ENCODE measurements at regions of chr11 and their contacts with region 1.

Region 1: GRCh38 chr11:111230122-111230465 is 15.4 kb upstream of the POU2AF2 start:
- DNase-seq: no peak
- ATAC-seq: peak; percentile 50
- H3K4me3 ChIP-seq: no peak overlapping the region
- H3K27ac ChIP-seq: peak overlapping the region; percentile 33; the same call in 1 of the 2 replicates
- H3K4me1 ChIP-seq: peaks cover 8% of the 10 kb centered on the region
- H3K27me3 ChIP-seq: no peaks in the 10 kb centered on the region
- CTCF ChIP-seq: no peak
- POLR2A ChIP-seq: no peak
- RAD21 ChIP-seq: no peak

Region 2: DNA sequence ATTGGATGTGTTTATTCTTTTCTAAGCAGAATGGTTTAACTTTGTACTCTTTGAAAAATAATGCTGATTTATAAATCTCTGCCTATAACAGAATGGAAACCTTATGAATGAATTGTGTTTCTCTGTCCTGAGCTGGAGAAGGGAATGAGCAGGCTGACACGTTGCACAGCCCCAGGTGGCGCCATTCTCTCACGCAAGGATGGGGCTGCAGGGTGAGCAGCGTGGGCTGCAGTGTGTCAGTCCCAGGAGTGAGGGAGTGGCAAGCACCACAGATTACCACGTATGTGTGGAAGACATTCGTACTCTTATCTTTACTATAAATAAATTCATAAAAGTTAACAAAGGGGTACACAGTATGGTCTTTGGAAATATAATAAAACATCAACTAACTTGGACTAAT is 766.9 kb before region 1 on chr11:
- CTCF ChIA-PET with region 1: no interaction called
- POLR2A ChIA-PET with region 1: no interaction called
- dilution Hi-C with region 1: no loop called
- in situ Hi-C with region 1: loop called (anchors 5 kb)
- intact Hi-C with region 1: loop called (anchors 1 kb)
- DNase-seq: peak; percentile 66
- ATAC-seq: peak; percentile 96
- H3K4me3 ChIP-seq: no peak overlapping the region
- H3K27ac ChIP-seq: no peak overlapping the region
- H3K4me1 ChIP-seq: no peaks in the 10 kb centered on the region
- H3K27me3 ChIP-seq: no peaks in the 10 kb centered on the region
- CTCF ChIP-seq: peak; percentile 59
- POLR2A ChIP-seq: no peak
- RAD21 ChIP-seq: peak; percentile 83

Region 3: GRCh38 chr11:110621826-110622225 is 608.3 kb before region 1 on chr11:
- CTCF ChIA-PET with region 1: no interaction called
- POLR2A ChIA-PET with region 1: interaction called, 3 read pairs
- dilution Hi-C with region 1: no loop called
- in situ Hi-C with region 1: no loop called
- intact Hi-C with region 1: loop called (anchors 10 kb)
- DNase-seq: peak; percentile 78
- ATAC-seq: peak; percentile 72
- H3K4me3 ChIP-seq: no peak overlapping the region
- H3K27ac ChIP-seq: no peak overlapping the region
- H3K4me1 ChIP-seq: no peaks in the 10 kb centered on the region
- H3K27me3 ChIP-seq: no peaks in the 10 kb centered on the region
- CTCF ChIP-seq: no peak
- POLR2A ChIP-seq: no peak
- RAD21 ChIP-seq: no peak

Region 4: GRCh38 chr11:110858547-110858921 is 371.6 kb before region 1 on chr11:
- CTCF ChIA-PET with region 1: no interaction called
- POLR2A ChIA-PET with region 1: no interaction called
- dilution Hi-C with region 1: no loop called
- in situ Hi-C with region 1: no loop called
- intact Hi-C with region 1: loop called (anchors 5 kb)
- DNase-seq: no peak
- ATAC-seq: no peak
- H3K4me3 ChIP-seq: no peak overlapping the region
- H3K27ac ChIP-seq: peak overlapping the region; percentile 36; the same call in 1 of the 2 replicates
- H3K4me1 ChIP-seq: peaks cover 13% of the 10 kb centered on the region
- H3K27me3 ChIP-seq: no peaks in the 10 kb centered on the region; the same call in 1 of the 2 replicates
- CTCF ChIP-seq: no peak
- POLR2A ChIP-seq: no peak
- RAD21 ChIP-seq: no peak

Region 5: DNA sequence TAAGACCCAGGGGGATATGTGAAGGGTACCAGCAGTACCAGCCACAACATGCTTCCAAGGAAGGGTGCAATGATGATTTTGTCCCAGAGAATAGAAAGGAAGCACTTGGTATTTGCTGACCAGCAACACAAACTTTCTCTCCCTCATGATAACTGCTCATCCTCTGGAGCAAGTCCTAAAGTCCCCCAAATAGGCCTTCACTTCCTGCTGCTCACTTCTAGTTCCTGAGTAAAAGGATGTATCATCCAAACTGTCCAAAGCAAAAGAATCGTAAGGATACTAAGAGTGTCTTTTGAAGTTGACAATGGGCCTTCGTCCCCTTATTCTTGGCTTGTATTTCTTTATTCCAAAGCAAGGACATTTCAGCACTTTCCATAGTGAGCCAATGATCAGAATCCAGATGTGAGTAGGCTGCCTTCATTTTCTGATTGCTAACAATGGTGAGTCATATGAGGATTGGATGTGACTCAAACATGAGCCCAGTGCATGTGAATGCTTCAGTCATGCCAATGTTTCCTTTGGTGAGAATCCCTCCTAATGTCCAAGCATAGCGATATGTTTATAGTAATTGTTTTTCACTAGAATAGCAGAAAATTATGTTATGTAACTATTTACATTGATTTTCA is 228.0 kb before region 1 on chr11:
- CTCF ChIA-PET with region 1: no interaction called
- POLR2A ChIA-PET with region 1: no interaction called
- dilution Hi-C with region 1: no loop called
- in situ Hi-C with region 1: no loop called
- intact Hi-C with region 1: loop called (anchors 5 kb)
- DNase-seq: peak; percentile 95
- ATAC-seq: peak; percentile 70
- H3K4me3 ChIP-seq: no peak overlapping the region
- H3K27ac ChIP-seq: peak overlapping the region; percentile 37; the same call in 1 of the 2 replicates
- H3K4me1 ChIP-seq: peaks cover 8% of the 10 kb centered on the region
- H3K27me3 ChIP-seq: no peaks in the 10 kb centered on the region
- CTCF ChIP-seq: no peak
- POLR2A ChIP-seq: no peak
- RAD21 ChIP-seq: no peak

Region 6: GRCh38 chr11:111105566-111105965 is 124.5 kb before region 1 on chr11:
- CTCF ChIA-PET with region 1: no interaction called
- POLR2A ChIA-PET with region 1: no interaction called
- dilution Hi-C with region 1: no loop called
- in situ Hi-C with region 1: no loop called
- intact Hi-C with region 1: no loop called
- DNase-seq: peak; percentile 69
- ATAC-seq: peak; percentile 49; the same call in 1 of the 2 replicates
- H3K4me3 ChIP-seq: no peak overlapping the region
- H3K27ac ChIP-seq: no peak overlapping the region
- H3K4me1 ChIP-seq: peaks cover 4% of the 10 kb centered on the region
- H3K27me3 ChIP-seq: no peaks in the 10 kb centered on the region
- CTCF ChIP-seq: no peak
- POLR2A ChIP-seq: no peak
- RAD21 ChIP-seq: no peak